Left cardiac atrium (tissue), 4 donors: ENCODE measurements at regions of chr17 and their contacts with region 1.

Region 1: GRCh38 chr17:36183001-36183971 is 6.8 kb upstream of the TBC1D3B start:
- DNase-seq: peak; percentile 79
- ATAC-seq: peak; percentile 94 to 96

Region 2: GRCh38 chr17:36105781-36106492 is 77.3 kb before region 1 on chr17:
- intact Hi-C with region 1: loop called in 1 of 2 experiments (anchors 1 kb)
- DNase-seq: no peak
- ATAC-seq: no peak